Left cardiac atrium (tissue), 4 donors: ENCODE measurements at regions of chr4 and their contacts with region 1.

Region 1: GRCh38 chr4:121192480-121192879 is 28.4 kb upstream of the TNIP3 start:
- DNase-seq: no peak
- ATAC-seq: no peak

Region 2: GRCh38 chr4:121053601-121054143 is 138.8 kb before region 1 on chr4:
- intact Hi-C with region 1: no loop called
- DNase-seq: no peak
- ATAC-seq: no peak

Region 3: GRCh38 chr4:121182296-121182695 is 10.2 kb before region 1 on chr4:
- intact Hi-C with region 1: no loop called
- DNase-seq: no peak
- ATAC-seq: no peak

Region 4: DNA sequence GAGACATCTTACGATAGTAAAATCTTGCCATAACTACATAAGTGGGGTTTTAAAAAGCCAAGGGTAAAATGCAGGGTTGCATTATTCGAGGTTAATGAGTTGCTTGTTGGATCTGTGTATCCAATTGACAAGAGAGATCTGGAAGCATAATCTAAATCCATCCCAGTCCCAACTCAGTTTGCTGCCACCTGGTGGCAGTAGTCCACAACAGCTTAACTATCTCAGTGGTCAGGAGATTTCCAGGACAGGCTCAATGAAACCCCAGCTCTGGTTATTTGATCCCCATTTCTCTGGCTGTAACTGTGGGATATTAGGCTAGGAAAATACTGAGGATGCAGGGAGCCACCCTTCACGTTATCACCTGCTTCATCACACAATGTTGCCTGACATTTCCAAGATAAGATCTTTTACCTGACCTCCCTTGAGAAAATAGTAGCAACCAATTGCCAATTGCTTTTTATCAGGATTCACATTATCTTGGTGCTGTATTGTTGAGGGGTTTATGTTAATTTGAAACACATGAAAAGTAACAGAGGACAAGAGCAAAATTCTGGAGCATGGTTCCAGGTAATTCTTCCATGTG is 59.8 kb after region 1 on chr4:
- intact Hi-C with region 1: loop called in 1 of 2 experiments (anchors 2 kb)
- DNase-seq: peak; percentile 63
- ATAC-seq: peak; percentile 69 to 72